WTC11 (cell line): ENCODE measurements at regions of chr20 and their contacts with region 1.

Region 1: GRCh38 chr20:63309261-63310071 is 16.5 kb downstream of the COL20A1 start:
- DNase-seq: peak; percentile 75
- ATAC-seq: peak; percentile 76
- H3K4me3 Mint-ChIP-seq: no peak overlapping the region
- H3K27ac Mint-ChIP-seq: no peak overlapping the region
- H3K4me1 Mint-ChIP-seq: no peaks in the 10 kb centered on the region
- H3K27me3 Mint-ChIP-seq: peaks cover 3% of the 10 kb centered on the region; the same call in 1 of the 2 replicates
- CTCF ChIP-seq: peak; percentile 94

Region 2: DNA sequence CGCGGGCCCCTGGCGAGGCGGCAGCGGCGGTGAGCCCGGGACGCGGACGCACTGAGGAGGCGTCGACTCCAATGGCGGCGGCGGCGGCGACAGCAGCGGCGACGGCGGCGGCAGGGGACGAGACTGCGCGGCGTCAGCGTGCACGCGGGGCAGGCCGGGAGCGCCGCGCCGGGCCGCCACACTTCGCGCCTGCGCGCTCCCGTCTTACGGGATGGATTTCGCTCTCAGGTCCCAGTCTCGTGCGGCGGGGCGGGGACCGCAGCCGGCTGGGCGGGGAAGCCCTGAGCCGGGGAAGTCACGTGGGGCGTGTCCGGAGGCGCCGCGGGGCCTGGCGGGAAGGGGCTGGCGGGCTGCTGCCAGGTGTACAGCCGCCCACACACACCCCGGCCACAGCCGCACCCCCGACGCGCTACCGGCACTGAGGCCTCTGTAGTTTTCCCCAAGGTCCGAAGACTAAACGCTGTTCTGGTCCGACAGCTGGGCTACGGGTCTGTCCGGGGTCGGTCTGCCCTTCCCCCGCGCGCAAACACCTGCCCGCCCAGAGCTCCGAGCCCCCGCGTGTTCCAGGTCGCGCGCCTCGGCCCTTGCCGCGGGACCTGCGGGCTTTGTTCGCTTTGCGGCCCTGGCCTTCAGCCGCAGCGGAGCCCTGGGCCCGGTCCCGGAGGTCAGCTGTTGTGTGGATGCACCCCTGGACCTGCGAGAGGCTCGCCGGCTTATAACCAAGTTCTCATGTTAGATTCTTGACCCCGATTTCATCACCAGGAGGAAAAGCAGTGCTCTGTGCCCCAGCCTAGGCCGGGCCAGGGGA is 93.2 kb before region 1 on chr20 and contains the start of gene YTHDF1:
- CTCF ChIA-PET with region 1: no interaction called
- POLR2A ChIA-PET with region 1: no interaction called
- DNase-seq: peak; percentile 93
- ATAC-seq: peak; percentile 85
- H3K4me3 Mint-ChIP-seq: peak within 1 kb of the TSS; percentile 96
- H3K27ac Mint-ChIP-seq: peak within 1 kb of the TSS; percentile 93
- H3K4me1 Mint-ChIP-seq: peaks cover 28% of the 10 kb centered on the region
- H3K27me3 Mint-ChIP-seq: peaks cover 4% of the 10 kb centered on the region; the same call in 1 of the 2 replicates
- CTCF ChIP-seq: no peak
- total RNA-seq, gene YTHDF1: 50.2 to 61.3 TPM (median 51.3 TPM) in 3 replicates

Region 3: GRCh38 chr20:63290677-63291472 is 18.6 kb before region 1 on chr20:
- CTCF ChIA-PET with region 1: interaction called, 39 read pairs
- POLR2A ChIA-PET with region 1: no interaction called
- DNase-seq: peak; percentile 86
- ATAC-seq: peak; percentile 80
- H3K4me3 Mint-ChIP-seq: no peak overlapping the region
- H3K27ac Mint-ChIP-seq: no peak overlapping the region
- H3K4me1 Mint-ChIP-seq: peaks cover 15% of the 10 kb centered on the region
- H3K27me3 Mint-ChIP-seq: peaks cover 5% of the 10 kb centered on the region
- CTCF ChIP-seq: peak; percentile 94

Region 4: GRCh38 chr20:63330940-63331339 is 21.5 kb after region 1 on chr20:
- CTCF ChIA-PET with region 1: interaction called, 13 read pairs
- POLR2A ChIA-PET with region 1: interaction called, 4 read pairs
- DNase-seq: peak; percentile 54
- ATAC-seq: peak; percentile 88
- H3K4me3 Mint-ChIP-seq: no peak overlapping the region
- H3K27ac Mint-ChIP-seq: no peak overlapping the region
- H3K4me1 Mint-ChIP-seq: no peaks in the 10 kb centered on the region
- H3K27me3 Mint-ChIP-seq: peaks cover 2% of the 10 kb centered on the region
- CTCF ChIP-seq: no peak

Region 5: DNA sequence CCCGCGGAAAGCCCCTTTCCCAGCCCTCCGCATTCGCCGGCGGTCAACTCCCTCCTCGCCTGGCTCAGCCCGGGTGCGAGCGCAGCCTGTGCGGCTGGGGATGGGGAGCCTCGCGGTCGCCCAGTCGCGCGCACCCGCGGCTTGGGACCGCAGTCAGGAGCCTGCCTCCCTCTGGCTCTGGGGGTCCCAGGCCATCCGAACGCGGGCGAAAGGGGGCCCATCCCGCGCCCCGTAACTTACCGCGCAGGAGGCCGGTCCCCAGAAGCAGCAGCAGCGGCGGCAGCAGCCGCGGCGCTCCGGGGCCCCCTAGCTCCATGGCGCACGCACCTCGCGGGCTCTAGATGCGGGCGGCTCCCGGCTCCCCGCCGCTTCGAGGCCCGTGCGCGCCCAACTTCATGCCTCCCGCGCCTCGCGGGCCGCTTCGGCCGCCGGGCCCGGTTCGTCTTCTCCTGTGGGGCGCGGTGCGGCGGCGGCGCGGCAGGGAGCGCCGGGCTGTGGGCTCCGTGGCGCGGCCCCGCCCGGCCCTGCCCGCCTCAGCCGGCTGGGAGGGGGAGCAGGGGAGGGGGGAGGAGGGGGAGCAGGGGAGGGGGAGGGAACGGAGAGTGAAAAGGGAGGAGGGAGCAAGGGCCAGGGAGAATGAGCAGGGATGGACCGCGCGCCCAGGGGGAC is 51.5 kb after region 1 on chr20 and contains the start of gene CHRNA4:
- CTCF ChIA-PET with region 1: interaction called, 25 read pairs
- POLR2A ChIA-PET with region 1: no interaction called
- DNase-seq: peak; percentile 49
- ATAC-seq: peak; percentile 41
- H3K4me3 Mint-ChIP-seq: peak within 1 kb of the TSS; percentile 60
- H3K27ac Mint-ChIP-seq: no peak within 1 kb of the TSS
- H3K4me1 Mint-ChIP-seq: peaks cover 11% of the 10 kb centered on the region
- H3K27me3 Mint-ChIP-seq: peaks cover 12% of the 10 kb centered on the region
- CTCF ChIP-seq: no peak
- total RNA-seq, gene CHRNA4: 2.5 to 5.7 TPM (median 4.8 TPM) in 3 replicates

Region 6: GRCh38 chr20:63482856-63483695 is 173.6 kb after region 1 on chr20:
- CTCF ChIA-PET with region 1: interaction called, 10 read pairs
- POLR2A ChIA-PET with region 1: no interaction called
- DNase-seq: no peak
- ATAC-seq: no peak
- H3K4me3 Mint-ChIP-seq: no peak overlapping the region
- H3K27ac Mint-ChIP-seq: no peak overlapping the region
- H3K4me1 Mint-ChIP-seq: peaks cover 20% of the 10 kb centered on the region
- H3K27me3 Mint-ChIP-seq: peaks cover 5% of the 10 kb centered on the region; the same call in 1 of the 2 replicates
- CTCF ChIP-seq: no peak